ENCODE measurements at regions of chr1 and their contacts with region 1.

Region 1: DNA sequence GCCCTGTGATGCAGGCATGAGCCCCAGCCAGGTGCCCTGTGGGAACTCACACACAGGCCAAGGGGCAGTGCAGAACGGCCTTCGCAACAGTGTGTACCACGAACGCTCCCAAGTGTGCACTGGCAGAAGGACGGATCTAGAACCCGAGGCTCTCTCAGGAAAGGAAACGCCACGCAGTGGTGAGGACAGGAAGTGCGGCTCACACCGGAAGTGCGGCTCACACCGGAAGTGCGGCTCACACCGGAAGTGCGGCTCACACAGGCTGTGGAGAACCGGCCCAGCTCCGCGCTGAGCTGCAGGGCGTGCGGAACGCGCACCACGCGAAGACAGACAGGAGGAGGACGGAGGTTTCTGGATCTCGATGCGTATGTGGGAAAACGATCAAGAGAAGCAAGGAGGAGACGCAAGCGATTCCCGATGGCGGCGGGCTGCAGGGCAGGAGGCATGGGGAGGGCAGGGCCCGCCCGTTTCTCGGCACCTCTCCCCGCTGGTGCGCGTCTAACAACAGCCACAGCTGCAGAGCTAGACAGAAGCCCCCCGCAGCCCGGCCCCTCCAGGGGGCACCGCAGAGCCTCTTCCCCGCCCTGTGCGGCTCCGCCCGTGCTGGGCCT is 35.9 kb upstream of the TMEM52 start:
- DNase-seq: peak in 2 of 3 donors; percentile 34 to 44
- ATAC-seq: no peak
- H3K4me3 ChIP-seq: no peak overlapping the region
- H3K27ac ChIP-seq: no peak overlapping the region
- H3K4me1 ChIP-seq: no peaks in the 10 kb centered on the region
- H3K27me3 ChIP-seq: no peaks in the 10 kb centered on the region

Region 2: DNA sequence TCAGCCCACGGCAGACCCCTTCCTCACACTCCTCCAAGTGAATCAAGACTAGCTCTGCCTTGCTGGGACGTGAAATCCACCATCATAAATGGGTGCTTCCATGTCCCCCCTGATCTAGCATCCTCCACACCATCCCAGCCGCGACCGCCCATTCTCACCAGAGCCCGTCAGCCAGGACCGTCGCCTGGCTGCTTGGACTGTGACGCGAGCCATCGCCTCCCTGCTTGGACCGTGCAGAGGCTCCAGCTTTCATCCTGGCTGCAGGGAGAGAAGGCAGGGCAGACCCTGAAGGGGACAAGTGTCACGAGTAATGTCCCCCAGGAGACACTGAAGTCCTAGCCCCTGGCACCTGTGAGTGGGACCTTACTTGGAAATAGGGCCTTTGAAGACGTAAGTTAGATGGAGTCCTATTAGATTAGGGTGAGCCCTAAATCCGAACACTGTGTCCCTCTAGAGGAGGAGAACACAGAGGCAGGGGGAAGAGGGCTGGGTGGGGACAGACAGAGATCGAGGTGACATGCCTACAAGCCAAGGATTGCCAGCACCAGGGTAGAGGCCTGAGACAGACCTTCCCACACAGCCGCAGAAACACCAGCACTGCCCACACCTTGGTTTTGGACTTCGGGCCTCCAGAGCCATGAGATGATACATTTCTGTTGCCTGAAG is 82.5 kb after region 1 on chr1:
- intact Hi-C with region 1: loop called in 2 of 4 experiments (anchors 5 kb)
- DNase-seq: no peak
- ATAC-seq: no peak
- H3K4me3 ChIP-seq: no peak overlapping the region
- H3K27ac ChIP-seq: no peak overlapping the region
- H3K4me1 ChIP-seq: no peaks in the 10 kb centered on the region
- H3K27me3 ChIP-seq: no peaks in the 10 kb centered on the region

Measured in right cardiac atrium (tissue), 5 donors.